Body of pancreas (tissue), 4 donors: ENCODE measurements at regions of chr11 and their contacts with region 1.

Region 1: DNA sequence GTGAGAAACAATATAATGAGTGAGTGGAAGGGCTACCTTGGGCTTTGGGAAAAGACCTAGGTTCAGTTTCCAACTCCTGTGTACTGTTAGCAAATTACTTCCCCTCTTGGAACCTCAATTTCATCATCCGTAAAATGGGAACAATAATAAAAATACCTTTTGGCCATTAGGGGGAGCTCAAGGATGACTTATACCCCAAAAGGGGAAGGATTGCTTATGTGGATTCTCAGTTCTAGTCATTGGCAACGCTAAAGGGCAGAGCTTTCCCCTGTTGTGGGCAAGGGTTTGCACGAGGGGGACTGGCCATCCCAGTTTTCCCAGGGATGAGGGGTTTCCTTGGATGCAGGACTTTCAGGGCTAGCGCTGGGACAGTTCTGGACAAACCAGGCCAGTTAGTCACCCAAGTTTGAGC is 3.1 kb upstream of the COMMD9 start:
- DNase-seq: no peak
- ATAC-seq: no peak
- H3K4me3 ChIP-seq: no peak overlapping the region
- H3K27ac ChIP-seq: no peak overlapping the region
- H3K4me1 ChIP-seq: peaks cover 18% of the 10 kb centered on the region
- H3K27me3 ChIP-seq: no peaks in the 10 kb centered on the region
- CTCF ChIP-seq: peak in 5 of 7 experiments; percentile 29 to 61 (median 52)
- POLR2A ChIP-seq: no peak

Region 2: DNA sequence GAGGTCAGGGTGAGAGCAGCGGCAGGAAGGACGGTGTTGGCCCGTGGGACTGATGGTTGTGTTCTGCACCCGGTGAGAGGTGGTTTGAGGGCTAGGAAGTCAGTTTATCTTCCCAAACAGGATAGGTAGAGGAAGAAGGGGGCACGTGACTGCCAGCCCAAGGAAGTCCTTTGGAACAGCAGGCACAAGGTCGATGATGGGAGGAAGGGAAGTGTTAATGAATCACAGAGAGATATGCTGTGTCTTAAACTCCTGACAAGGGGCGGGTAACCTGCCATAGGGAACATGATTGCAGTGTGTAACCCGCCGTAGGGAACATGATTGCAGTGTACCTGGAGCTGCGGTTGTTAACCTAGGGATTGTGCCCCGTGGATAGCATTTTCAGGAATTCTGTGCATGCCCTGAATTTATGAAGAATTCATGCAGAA is 52.8 kb after region 1 on chr11:
- intact Hi-C with region 1: no loop called
- DNase-seq: no peak
- ATAC-seq: no peak
- H3K4me3 ChIP-seq: no peak overlapping the region
- H3K27ac ChIP-seq: no peak overlapping the region
- H3K4me1 ChIP-seq: peaks cover 13% of the 10 kb centered on the region
- H3K27me3 ChIP-seq: no peaks in the 10 kb centered on the region
- CTCF ChIP-seq: no peak
- POLR2A ChIP-seq: no peak

Region 3: DNA sequence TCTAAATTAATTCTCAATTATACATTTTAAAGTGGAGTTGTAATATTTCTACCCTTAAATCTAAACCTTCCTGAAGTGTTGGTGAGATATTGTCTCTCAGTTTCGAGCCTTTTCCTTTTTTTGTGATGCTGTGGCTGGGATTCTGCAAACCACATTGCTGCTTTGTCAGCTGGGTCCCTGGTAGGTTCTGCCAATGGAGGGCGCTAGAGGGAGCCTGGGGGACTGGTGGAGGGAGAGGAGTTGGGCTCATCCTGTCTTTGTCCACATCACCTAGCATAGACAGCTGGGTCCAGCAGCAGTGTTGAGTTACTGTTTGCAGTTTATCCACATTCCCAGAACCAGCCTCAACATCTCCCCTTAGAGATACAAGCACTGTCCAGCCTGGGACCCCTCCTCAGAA is 176.7 kb after region 1 on chr11:
- intact Hi-C with region 1: loop called (anchors 10 kb)
- DNase-seq: no peak
- ATAC-seq: no peak
- H3K4me3 ChIP-seq: no peak overlapping the region
- H3K27ac ChIP-seq: no peak overlapping the region
- H3K4me1 ChIP-seq: peaks cover 14% of the 10 kb centered on the region
- H3K27me3 ChIP-seq: no peaks in the 10 kb centered on the region
- CTCF ChIP-seq: no peak
- POLR2A ChIP-seq: no peak